ENCODE measurements at regions of chr1 and their contacts with region 1.

Region 1: DNA sequence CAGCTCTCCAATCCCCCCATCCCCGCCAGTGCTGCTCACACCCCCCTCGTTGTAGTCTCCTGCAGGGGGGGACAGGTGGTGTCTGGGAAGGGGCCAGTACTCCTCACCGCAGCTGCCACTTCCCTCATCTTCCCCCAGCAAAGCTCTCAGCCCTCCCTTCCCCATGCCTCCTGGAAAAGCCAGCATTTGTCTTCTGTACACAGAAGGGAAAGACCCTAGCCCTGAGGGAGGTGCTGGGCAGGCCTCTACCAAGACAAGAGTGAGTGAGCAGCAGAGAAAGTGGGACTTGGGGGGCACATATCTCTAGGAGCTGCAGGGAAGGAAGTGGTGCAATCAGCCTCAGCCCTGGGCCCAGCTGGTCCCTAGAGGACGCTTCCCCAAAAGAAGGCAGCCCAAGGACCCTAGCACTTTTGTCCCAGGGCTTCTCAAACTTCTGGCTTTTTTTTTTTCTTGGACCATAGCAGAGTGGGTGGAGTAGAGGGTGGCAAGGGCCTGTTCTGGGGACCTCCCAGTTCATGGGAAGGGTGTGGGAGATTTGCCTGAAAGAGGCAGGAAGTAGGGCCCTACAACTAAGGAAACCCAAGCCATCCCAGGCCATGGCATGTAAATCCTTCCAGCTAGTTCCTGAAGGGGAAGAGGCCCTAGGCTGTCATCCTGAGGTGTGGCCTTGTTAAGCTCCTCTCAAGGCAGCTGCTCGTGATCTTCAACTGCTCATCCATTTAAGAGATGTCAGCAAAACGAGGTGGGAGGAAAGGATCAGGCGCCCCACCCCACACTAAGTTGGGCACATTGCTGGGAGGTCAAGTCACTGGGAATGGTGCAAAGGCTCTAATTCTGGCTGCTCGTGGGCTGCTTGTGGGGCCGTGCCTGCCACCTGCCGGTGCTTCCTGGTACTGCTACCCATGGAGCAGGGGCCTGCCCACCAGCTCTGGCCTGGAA is 12.6 kb downstream of the ZC3H12A start:
- DNase-seq: peak; percentile 84
- ATAC-seq: peak; percentile 80
- H3K4me3 Mint-ChIP-seq: no peak overlapping the region
- H3K27ac Mint-ChIP-seq: no peak overlapping the region; the same call in 1 of the 2 replicates
- H3K4me1 Mint-ChIP-seq: peaks cover 13% of the 10 kb centered on the region
- H3K27me3 Mint-ChIP-seq: no peaks in the 10 kb centered on the region
- CTCF ChIP-seq: peak; percentile 95

Region 2: GRCh38 chr1:36576118-36576517 is 910.8 kb before region 1 on chr1:
- CTCF ChIA-PET with region 1: interaction called, 10 read pairs
- POLR2A ChIA-PET with region 1: no interaction called
- DNase-seq: peak; percentile 89
- ATAC-seq: peak; percentile 92
- H3K4me3 Mint-ChIP-seq: no peak overlapping the region
- H3K27ac Mint-ChIP-seq: no peak overlapping the region
- H3K4me1 Mint-ChIP-seq: peaks cover 16% of the 10 kb centered on the region
- H3K27me3 Mint-ChIP-seq: no peaks in the 10 kb centered on the region
- CTCF ChIP-seq: peak; percentile 76

Region 3: DNA sequence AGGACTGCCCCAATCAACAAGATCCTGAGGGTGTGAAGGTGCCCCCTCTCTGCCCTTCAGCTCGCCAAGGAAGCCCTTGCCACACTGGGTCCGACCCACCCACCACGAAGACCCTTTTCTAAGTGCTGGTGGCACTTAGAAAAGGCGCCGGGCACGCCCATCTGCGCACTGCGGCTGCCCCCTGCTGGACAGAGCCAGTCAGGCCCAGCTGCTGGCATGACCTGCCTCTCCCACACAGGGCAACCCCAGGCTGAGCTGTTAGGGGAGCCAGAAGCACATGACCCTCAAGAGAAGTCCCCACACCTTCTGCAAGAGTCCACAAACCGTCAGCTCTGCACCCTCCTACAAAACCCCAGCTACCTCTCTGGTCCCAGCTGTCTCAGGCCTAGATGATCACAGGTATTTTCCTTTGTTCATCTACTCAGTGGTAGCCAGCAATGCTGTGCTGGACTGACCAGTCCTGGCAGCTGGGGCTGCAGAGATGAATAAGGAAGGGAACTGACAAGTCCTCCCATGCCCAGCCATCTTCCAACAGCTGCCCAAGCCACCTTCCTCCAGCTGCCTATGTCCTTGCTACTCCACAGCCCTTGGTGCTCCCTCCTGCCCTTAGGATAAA is 52.5 kb before region 1 on chr1:
- CTCF ChIA-PET with region 1: interaction called, 24 read pairs
- POLR2A ChIA-PET with region 1: no interaction called
- DNase-seq: peak; percentile 88
- ATAC-seq: peak; percentile 91
- H3K4me3 Mint-ChIP-seq: no peak overlapping the region
- H3K27ac Mint-ChIP-seq: no peak overlapping the region
- H3K4me1 Mint-ChIP-seq: peaks cover 23% of the 10 kb centered on the region
- H3K27me3 Mint-ChIP-seq: peaks cover 29% of the 10 kb centered on the region
- CTCF ChIP-seq: peak; percentile 90

Region 4: GRCh38 chr1:37465593-37466517 is 21.1 kb before region 1 on chr1:
- CTCF ChIA-PET with region 1: interaction called, 279 read pairs
- POLR2A ChIA-PET with region 1: no interaction called
- DNase-seq: no peak
- ATAC-seq: no peak
- H3K4me3 Mint-ChIP-seq: no peak overlapping the region
- H3K27ac Mint-ChIP-seq: no peak overlapping the region
- H3K4me1 Mint-ChIP-seq: no peaks in the 10 kb centered on the region
- H3K27me3 Mint-ChIP-seq: no peaks in the 10 kb centered on the region
- CTCF ChIP-seq: no peak

Region 5: DNA sequence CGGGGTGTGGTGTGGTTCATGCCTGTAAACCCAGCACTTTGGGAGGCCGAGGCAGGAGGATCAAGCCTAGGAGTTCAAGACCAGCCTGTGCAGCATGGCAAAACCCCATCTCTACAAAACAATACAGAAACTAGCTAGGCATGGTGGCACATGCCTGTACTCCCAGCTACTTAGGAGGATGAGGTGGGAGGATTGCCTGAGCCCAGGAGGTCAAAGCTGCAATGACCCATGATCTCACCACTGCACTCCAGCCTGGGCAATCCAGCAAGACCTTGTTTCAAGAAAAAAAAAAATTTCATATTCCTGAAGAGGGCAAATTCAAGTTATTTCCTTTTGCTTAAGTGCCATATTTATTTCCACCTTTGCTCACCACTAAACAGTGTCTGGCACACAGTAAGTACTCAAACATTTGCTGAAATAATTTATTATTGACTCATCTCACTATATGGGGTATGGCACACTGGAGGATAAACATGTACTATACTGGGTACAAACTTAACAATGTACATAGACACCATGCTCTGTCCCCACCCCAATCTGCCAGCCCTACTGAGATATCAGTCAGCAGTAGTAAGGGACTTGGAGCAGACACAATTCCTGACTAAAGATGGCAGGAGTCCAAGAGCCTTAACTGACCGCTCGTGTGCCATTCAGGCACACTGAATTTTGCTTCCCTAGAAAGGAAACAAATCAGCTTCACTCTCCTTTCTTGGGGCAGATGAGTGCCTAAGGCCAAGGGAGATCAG is 12.1 kb after region 1 on chr1:
- CTCF ChIA-PET with region 1: interaction called, 10 read pairs
- POLR2A ChIA-PET with region 1: no interaction called
- DNase-seq: no peak
- ATAC-seq: no peak
- H3K4me3 Mint-ChIP-seq: no peak overlapping the region
- H3K27ac Mint-ChIP-seq: no peak overlapping the region
- H3K4me1 Mint-ChIP-seq: no peaks in the 10 kb centered on the region
- H3K27me3 Mint-ChIP-seq: no peaks in the 10 kb centered on the region
- CTCF ChIP-seq: no peak

Region 6: DNA sequence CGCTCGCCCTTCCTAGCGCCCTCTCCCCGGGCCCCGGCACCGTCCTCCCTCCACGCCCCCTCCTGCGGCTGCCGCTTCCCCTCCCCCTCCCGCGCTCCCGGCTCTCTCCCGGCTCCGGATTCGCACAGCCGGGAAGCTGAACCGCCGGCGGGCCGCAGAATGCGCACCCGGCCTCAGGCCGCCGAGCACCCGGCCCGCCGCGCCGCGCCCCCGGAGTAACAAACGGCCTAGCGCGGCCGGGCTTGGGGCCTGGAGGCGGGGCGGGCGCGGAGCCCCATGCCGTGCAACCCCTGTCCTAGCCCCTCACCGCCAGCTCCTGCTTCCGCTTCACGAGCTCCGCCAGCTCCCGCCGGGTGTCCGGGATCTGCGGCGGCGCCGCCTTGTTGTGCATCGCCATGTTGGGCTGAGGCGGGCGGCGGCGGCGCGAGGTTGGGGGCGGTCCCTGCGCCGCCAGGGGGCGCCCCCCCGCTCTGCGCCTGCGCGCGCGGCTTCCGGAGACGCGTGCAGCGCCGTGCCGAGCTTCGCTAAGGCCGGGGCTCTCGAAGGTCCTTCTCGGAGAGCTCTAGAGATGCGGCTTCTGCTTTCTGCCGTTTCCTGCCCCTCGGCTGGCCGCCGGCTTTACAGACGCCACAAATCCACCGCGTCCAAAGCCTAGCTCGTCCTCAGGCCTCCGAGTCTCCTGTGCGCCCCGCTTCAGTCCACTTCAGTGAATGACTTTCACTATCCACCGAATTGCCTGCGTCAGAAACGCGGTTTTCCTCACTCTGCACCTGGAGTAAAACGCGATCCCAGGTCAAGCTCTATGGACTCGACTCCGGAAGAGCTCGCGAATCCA is 27.6 kb after region 1 on chr1 and contains the start of gene MEAF6:
- CTCF ChIA-PET with region 1: interaction called, 53 read pairs
- POLR2A ChIA-PET with region 1: interaction called, 7 read pairs
- DNase-seq: peak; percentile 81
- ATAC-seq: peak; percentile 93
- H3K4me3 Mint-ChIP-seq: peak within 1 kb of the TSS; percentile 98
- H3K27ac Mint-ChIP-seq: peak within 1 kb of the TSS; percentile 97
- H3K4me1 Mint-ChIP-seq: peaks cover 26% of the 10 kb centered on the region
- H3K27me3 Mint-ChIP-seq: 0 out of 2 replicates have a peak, but pooled peaks cover 6% of the 10 kb centered on the region
- CTCF ChIP-seq: peak; percentile 76
- total RNA-seq, gene MEAF6: 37.4 to 41.3 TPM (median 41.0 TPM) in 3 replicates

Region 7: GRCh38 chr1:37575692-37576091 is 88.7 kb after region 1 on chr1:
- CTCF ChIA-PET with region 1: no interaction called
- POLR2A ChIA-PET with region 1: no interaction called
- DNase-seq: no peak
- ATAC-seq: no peak
- H3K4me3 Mint-ChIP-seq: no peak overlapping the region
- H3K27ac Mint-ChIP-seq: no peak overlapping the region
- H3K4me1 Mint-ChIP-seq: no peaks in the 10 kb centered on the region
- H3K27me3 Mint-ChIP-seq: no peaks in the 10 kb centered on the region
- CTCF ChIP-seq: no peak